H1 (cell line): ENCODE measurements at regions of chr1 and their contacts with region 1.

Region 1: GRCh38 chr1:175373786-175374623 is 181.4 kb upstream of the KIAA0040 start:
- DNase-seq: peak; percentile 21 to 85
- H3K4me3 ChIP-seq: no peak overlapping the region
- H3K27ac ChIP-seq: no peak overlapping the region
- H3K4me1 ChIP-seq: peaks cover 0 to 4% (median 0%) of the 10 kb centered on the region in 4 experiments; a peak in 3 of 7 replicates
- H3K27me3 ChIP-seq: no peaks in the 10 kb centered on the region; a peak in 1 of 7 replicates
- CTCF ChIP-seq: peak; percentile 86 to 91 (median 90)
- EP300 ChIP-seq: no peak
- POLR2A ChIP-seq: no peak
- RAD21 ChIP-seq: peak; percentile 97 to 99

Region 2: GRCh38 chr1:175353066-175353465 is 20.9 kb before region 1 on chr1:
- CTCF ChIA-PET with region 1: interaction called, 18 read pairs
- POLR2A ChIA-PET with region 1: no interaction called
- DNase-seq: no peak
- H3K4me3 ChIP-seq: no peak overlapping the region
- H3K27ac ChIP-seq: no peak overlapping the region
- H3K4me1 ChIP-seq: no peaks in the 10 kb centered on the region
- H3K27me3 ChIP-seq: no peaks in the 10 kb centered on the region
- CTCF ChIP-seq: no peak
- EP300 ChIP-seq: no peak
- POLR2A ChIP-seq: no peak
- RAD21 ChIP-seq: no peak

Region 3: DNA sequence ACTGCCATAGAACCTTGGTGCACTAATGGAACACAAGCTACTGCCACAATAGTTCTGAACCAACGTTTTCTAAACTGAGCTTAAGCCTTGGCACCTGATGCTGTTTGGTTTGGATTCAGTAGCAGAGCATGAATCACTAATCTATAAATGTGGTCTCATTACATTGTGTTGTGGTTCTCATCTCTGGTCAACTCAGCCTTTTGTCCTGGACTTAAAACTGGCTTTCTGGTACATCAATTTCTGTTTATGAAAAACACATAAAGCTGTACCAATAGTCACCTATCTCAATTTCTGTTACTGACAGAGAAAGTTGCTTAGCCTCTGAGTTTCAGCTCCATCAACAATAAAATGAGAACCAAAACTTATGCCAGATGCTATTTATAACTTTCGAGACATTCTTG is 16.1 kb after region 1 on chr1:
- CTCF ChIA-PET with region 1: interaction called, 30 read pairs
- POLR2A ChIA-PET with region 1: no interaction called
- DNase-seq: no peak
- H3K4me3 ChIP-seq: no peak overlapping the region
- H3K27ac ChIP-seq: no peak overlapping the region
- H3K4me1 ChIP-seq: peaks cover 0 to 4% (median 2%) of the 10 kb centered on the region in 4 experiments; a peak in 1 of 7 replicates
- H3K27me3 ChIP-seq: no peaks in the 10 kb centered on the region
- CTCF ChIP-seq: no peak
- EP300 ChIP-seq: no peak
- POLR2A ChIP-seq: no peak
- RAD21 ChIP-seq: no peak

Region 4: GRCh38 chr1:175530183-175530582 is 156.2 kb after region 1 on chr1:
- CTCF ChIA-PET with region 1: interaction called, 11 read pairs
- POLR2A ChIA-PET with region 1: no interaction called
- DNase-seq: no peak
- H3K4me3 ChIP-seq: no peak overlapping the region
- H3K27ac ChIP-seq: no peak overlapping the region
- H3K4me1 ChIP-seq: 0 out of 7 replicates have a peak, but pooled peaks cover 0 to 2% (median 0%) of the 10 kb centered on the region in 4 experiments
- H3K27me3 ChIP-seq: no peaks in the 10 kb centered on the region; a peak in 1 of 7 replicates
- CTCF ChIP-seq: no peak
- EP300 ChIP-seq: no peak
- POLR2A ChIP-seq: no peak
- RAD21 ChIP-seq: no peak

Region 5: DNA sequence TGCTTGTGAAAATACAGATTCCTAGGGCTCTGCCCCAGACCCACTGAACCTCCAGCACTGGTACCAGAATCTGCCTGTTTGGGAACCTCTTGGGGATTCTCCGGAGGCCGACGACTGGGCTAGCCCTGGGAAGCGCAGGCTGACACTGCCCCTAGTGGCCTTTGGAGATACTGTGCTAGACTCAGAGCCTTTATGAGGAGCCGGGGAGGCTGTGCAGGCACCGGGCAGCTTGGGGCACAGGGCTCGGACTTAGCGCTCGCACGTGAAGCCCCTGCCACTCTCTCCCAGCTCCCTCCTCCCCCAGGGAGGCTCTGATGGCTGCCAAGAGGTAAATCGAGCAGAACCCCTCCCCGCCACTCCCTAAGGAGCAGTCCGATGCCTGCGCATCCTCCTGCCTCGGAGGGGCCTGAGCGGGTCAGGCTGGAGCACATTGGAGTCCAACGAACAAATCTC is 514.0 kb after region 1 on chr1:
- CTCF ChIA-PET with region 1: interaction called, 20 read pairs
- POLR2A ChIA-PET with region 1: no interaction called
- DNase-seq: peak; percentile 68 to 89
- H3K4me3 ChIP-seq: peak overlapping the region; percentile 1 to 50 (median 28); a peak in 6 of 8 replicates
- H3K27ac ChIP-seq: no peak overlapping the region
- H3K4me1 ChIP-seq: peaks cover 0 to 7% (median 5%) of the 10 kb centered on the region in 4 experiments; a peak in 5 of 7 replicates
- H3K27me3 ChIP-seq: peaks cover 18 to 49% (median 44%) of the 10 kb centered on the region in 4 experiments
- CTCF ChIP-seq: peak; percentile 87 to 94 (median 92)
- EP300 ChIP-seq: peak in 1 of 2 experiments; percentile 40; a peak in 1 of 3 replicates
- POLR2A ChIP-seq: no peak
- RAD21 ChIP-seq: peak; percentile 89 to 93